ENCODE measurements at regions of chr12 and their contacts with region 1.

Region 1: DNA sequence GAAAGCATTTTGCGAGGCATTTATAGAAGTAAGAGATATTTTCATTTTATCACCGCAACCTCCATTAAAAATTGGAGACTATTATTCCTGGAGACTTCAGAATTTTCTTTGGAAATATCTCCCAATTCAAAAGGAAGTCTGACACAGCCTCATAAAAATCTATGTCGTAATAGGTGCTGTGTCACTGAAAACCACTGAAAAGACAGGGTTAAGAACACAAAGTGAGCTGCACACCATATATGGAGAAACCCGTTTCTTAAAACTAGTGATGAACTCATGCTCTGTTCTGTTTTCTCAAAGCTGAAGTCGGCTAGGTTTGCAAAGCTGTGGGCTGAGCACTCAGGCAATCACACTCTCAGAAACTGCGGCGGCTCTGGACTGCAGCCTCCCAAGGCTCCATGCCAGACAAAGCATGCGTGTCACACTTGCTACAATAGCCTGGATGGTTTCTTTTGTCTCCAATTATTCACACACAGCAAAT is at the start of gene GLIPR1:
- DNase-seq: peak; percentile 78 to 85 (median 83)
- H3K4me3 ChIP-seq: peak within 1 kb of the TSS; percentile 74 to 84
- H3K4me3 Mint-ChIP-seq: peak within 1 kb of the TSS; percentile 92 to 99 (median 97)
- H3K27ac ChIP-seq: peak within 1 kb of the TSS; percentile 72
- H3K27ac Mint-ChIP-seq: peak within 1 kb of the TSS; percentile 98 to 100 (median 99)
- H3K4me1 ChIP-seq: peaks cover 77% of the 10 kb centered on the region
- H3K4me1 Mint-ChIP-seq: peaks cover 60 to 85% (median 70%) of the 10 kb centered on the region in 4 donors
- H3K27me3 ChIP-seq: no peaks in the 10 kb centered on the region
- H3K27me3 Mint-ChIP-seq: peaks cover 0 to 2% of the 10 kb centered on the region in 2 donors
- total RNA-seq, gene GLIPR1: 96.1 to 99.8 TPM

Region 2: DNA sequence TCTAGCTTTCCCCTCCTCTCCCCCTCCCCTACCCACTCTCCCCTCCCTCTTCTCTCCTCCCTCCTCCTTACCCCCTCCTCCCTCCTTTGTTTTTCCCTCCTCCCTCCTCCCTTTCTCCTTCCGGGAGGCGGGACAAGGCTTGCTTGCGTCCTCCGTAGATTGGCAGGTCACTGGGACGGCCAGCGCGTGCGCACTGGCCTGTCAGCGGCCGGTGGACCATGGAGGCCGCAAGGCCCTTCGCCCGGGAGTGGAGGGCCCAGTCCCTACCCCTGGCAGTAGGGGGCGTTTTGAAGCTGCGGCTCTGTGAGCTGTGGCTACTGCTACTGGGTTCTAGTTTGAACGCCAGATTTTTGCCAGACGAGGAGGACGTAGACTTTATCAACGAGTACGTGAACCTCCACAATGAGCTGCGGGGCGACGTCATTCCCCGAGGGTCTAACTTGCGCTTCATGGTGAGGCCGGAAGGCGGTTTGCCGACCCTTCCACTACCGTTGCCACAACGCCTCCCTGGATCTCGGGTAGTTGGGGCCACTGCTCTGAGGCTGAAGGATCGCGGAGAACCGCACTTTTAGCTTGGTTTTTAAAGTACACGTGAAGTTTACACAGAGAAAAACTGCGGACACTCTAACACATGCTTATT is 89.5 kb before region 1 on chr12 and contains the start of gene GLIPR1L2:
- CTCF ChIA-PET with region 1: interaction called, 87 read pairs
- POLR2A ChIA-PET with region 1: interaction called, 106 read pairs
- intact Hi-C with region 1: loop called (anchors 1 kb)
- DNase-seq: peak; percentile 82 to 86 (median 84)
- H3K4me3 ChIP-seq: peak within 1 kb of the TSS; percentile 69 to 74
- H3K4me3 Mint-ChIP-seq: peak within 1 kb of the TSS; percentile 90 to 97 (median 93)
- H3K27ac ChIP-seq: peak within 1 kb of the TSS; percentile 74
- H3K27ac Mint-ChIP-seq: peak within 1 kb of the TSS; percentile 96 to 99 (median 97)
- H3K4me1 ChIP-seq: peaks cover 56% of the 10 kb centered on the region
- H3K4me1 Mint-ChIP-seq: peaks cover 38 to 71% (median 51%) of the 10 kb centered on the region in 4 donors
- H3K27me3 ChIP-seq: no peaks in the 10 kb centered on the region
- H3K27me3 Mint-ChIP-seq: no peaks in the 10 kb centered on the region
- total RNA-seq, gene GLIPR1L2: 0.47 to 0.55 TPM

Region 3: DNA sequence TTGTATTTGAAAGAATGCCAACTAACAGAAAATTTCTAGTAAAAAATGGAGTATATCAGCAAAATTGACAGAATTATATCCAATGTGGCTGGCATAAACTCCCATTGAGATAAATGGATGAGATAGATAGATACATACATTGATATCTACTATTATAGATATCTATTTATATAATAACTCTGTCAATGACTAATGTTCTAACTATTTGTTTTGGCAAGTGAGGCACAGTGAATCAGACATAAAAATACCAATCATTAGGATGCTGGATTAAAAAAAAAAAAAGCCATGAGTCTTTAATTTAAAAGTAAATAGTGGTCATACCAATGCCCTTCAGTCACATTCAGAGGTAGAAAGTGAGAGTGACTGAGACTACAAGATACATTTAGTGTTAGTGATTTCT is 33.7 kb before region 1 on chr12:
- CTCF ChIA-PET with region 1: interaction called, 56 read pairs
- POLR2A ChIA-PET with region 1: interaction called, 7 read pairs
- intact Hi-C with region 1: no loop called
- DNase-seq: no peak
- H3K4me3 ChIP-seq: no peak overlapping the region
- H3K4me3 Mint-ChIP-seq: no peak overlapping the region
- H3K27ac ChIP-seq: no peak overlapping the region
- H3K27ac Mint-ChIP-seq: no peak overlapping the region
- H3K4me1 ChIP-seq: no peaks in the 10 kb centered on the region
- H3K4me1 Mint-ChIP-seq: peaks cover 0 to 2% (median 0%) of the 10 kb centered on the region in 4 donors
- H3K27me3 ChIP-seq: no peaks in the 10 kb centered on the region
- H3K27me3 Mint-ChIP-seq: peaks cover 0 to 3% of the 10 kb centered on the region in 2 donors

Region 4: DNA sequence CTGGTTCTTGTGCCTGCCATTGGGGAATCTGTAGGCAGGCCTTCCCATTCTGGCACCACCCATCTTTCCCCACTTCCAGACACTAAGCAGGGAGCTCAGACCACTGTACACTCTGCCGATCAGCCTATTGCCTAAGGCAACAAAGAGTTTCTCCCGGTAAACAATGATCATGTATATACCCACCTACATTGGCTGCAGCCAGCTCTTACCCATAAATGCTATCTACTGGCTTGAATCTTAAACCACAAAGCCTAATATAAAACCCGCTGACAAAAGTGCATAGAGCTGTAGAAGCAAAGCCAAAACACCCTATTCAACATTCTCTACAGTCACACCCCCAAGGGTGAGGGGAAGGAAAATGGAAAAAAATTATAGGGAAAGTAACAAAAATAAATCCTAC is 20.8 kb before region 1 on chr12:
- CTCF ChIA-PET with region 1: interaction called, 56 read pairs
- POLR2A ChIA-PET with region 1: interaction called, 204 read pairs
- intact Hi-C with region 1: loop called (anchors 1 kb)
- DNase-seq: no peak
- H3K4me3 ChIP-seq: peak overlapping the region in 1 of 2 donors; percentile 11
- H3K4me3 Mint-ChIP-seq: peak overlapping the region in 7 of 8 donors; percentile 19 to 79 (median 64)
- H3K27ac ChIP-seq: no peak overlapping the region
- H3K27ac Mint-ChIP-seq: peak overlapping the region; percentile 2 to 88 (median 72)
- H3K4me1 ChIP-seq: peaks cover 48% of the 10 kb centered on the region
- H3K4me1 Mint-ChIP-seq: peaks cover 42 to 70% (median 55%) of the 10 kb centered on the region in 4 donors
- H3K27me3 ChIP-seq: no peaks in the 10 kb centered on the region
- H3K27me3 Mint-ChIP-seq: no peaks in the 10 kb centered on the region

Region 5: DNA sequence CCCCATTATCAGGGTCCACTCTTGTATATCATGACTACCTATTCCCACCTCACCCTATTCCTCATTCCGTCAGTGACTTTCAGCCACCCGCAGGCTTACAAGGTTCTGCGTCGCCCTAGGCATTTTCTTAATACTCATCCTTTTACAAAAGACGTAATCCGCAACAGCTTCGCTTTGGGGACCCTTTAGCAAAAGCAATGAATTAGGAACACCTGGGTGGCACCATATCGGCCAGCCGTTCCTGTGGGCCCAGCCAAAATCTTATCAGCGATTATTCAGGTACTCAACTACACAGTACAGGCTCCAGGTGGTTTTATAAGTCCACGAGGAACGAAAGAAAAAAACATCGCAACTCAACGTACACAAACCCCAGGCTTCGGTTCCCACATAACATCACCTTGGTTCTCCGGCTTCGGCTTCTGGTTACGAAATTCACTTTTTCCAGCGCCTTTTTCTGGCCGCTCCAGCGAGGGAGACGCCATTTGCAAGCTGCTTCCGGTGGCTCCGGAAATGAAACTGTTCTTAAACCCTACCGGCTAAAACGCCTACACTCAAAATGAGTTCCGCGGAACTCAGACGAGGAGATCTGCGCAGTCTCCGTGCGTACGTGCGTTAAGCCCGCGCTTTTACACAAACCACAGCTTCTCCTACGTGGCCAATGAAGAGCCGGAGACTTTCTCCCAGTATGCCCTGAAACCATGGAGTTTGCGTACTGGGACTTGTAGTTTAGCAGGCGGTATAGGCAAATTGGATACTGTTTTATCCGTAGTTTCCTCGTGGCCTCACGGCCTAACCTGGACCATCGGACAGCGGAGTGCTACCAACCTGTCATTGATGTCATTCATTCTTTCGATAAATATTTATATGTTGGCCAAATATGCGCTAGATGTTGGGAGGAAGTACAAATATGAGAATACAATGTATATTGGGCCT is 30.9 kb after region 1 on chr12 and contains the start of gene KRR1:
- CTCF ChIA-PET with region 1: interaction called, 68 read pairs
- POLR2A ChIA-PET with region 1: interaction called, 39 read pairs
- intact Hi-C with region 1: loop called (anchors 1 kb)
- DNase-seq: peak; percentile 88 to 94 (median 92)
- H3K4me3 ChIP-seq: peak within 1 kb of the TSS; percentile 85 to 99
- H3K4me3 Mint-ChIP-seq: peak within 1 kb of the TSS; percentile 99 to 100 (median 100)
- H3K27ac ChIP-seq: peak within 1 kb of the TSS; percentile 94
- H3K27ac Mint-ChIP-seq: peak within 1 kb of the TSS; percentile 98 to 100 (median 100)
- H3K4me1 ChIP-seq: peaks cover 27% of the 10 kb centered on the region
- H3K4me1 Mint-ChIP-seq: peaks cover 25 to 42% (median 31%) of the 10 kb centered on the region in 4 donors
- H3K27me3 ChIP-seq: no peaks in the 10 kb centered on the region
- H3K27me3 Mint-ChIP-seq: no peaks in the 10 kb centered on the region
- total RNA-seq, gene KRR1: 60.7 to 65.0 TPM

Region 6: DNA sequence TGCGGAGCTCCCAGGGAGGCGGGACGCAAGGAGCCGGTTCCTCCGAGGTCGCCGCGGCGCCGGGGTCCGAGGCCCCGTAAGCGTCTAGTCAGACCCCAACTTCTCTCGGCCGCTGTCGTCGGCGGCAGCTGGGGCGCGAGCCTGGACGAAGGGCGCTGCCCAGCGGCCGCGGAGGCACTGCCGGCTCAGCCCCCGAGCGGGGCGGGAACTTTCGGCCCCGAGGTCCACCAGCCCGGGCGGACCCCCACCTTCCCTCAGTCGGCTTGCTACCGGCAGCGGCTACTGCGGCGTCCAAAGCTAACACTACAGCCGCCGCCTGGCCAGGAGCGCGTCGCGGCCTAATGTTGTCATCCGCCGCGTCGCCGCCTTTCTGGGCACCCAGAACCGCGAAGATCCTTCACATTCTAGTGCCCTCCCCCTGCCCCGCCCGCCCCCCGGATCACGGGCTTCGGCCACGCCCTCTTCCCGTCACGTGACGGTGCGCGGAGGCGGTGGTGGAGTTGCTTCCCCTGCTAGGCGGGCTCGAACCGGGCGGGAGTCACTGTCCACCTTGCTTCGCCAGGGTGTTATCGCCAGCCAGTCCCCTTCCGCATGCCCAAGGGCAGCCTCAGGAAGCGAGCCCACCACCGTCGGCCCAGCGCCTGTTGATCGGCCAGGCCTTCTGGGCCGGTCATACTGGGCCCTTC is 1079.0 kb after region 1 on chr12 and contains the start of gene OSBPL8:
- CTCF ChIA-PET with region 1: no interaction called
- POLR2A ChIA-PET with region 1: interaction called, 11 read pairs
- intact Hi-C with region 1: no loop called
- DNase-seq: peak; percentile 89 to 94 (median 90)
- H3K4me3 ChIP-seq: peak within 1 kb of the TSS; percentile 95
- H3K4me3 Mint-ChIP-seq: peak within 1 kb of the TSS; percentile 96 to 97 (median 96)
- H3K27ac ChIP-seq: peak within 1 kb of the TSS; percentile 89
- H3K27ac Mint-ChIP-seq: peak within 1 kb of the TSS; percentile 94 to 99 (median 98)
- H3K4me1 ChIP-seq: peaks cover 46% of the 10 kb centered on the region
- H3K4me1 Mint-ChIP-seq: peaks cover 24 to 52% (median 31%) of the 10 kb centered on the region in 4 donors
- H3K27me3 ChIP-seq: no peaks in the 10 kb centered on the region
- H3K27me3 Mint-ChIP-seq: no peaks in the 10 kb centered on the region
- total RNA-seq, gene OSBPL8: 126 to 127 TPM